ENCODE measurements at regions of chr6 and their contacts with region 1.

Region 1: GRCh38 chr6:26122793-26123674 is 35.8 kb downstream of the HFE start:
- DNase-seq: peak; percentile 89 to 99 (median 98)
- ATAC-seq: peak; percentile 87 to 90 (median 88)
- H3K4me3 ChIP-seq: peak overlapping the region; percentile 73 to 97 (median 82)
- H3K27ac ChIP-seq: peak overlapping the region; percentile 95 to 99 (median 98)
- H3K4me1 ChIP-seq: peaks cover 0 to 25% (median 17%) of the 10 kb centered on the region in 12 donors
- H3K27me3 ChIP-seq: no peaks in the 10 kb centered on the region
- CTCF ChIP-seq: peak in 1 of 12 donors; percentile 7
- POLR2A ChIP-seq: peak; percentile 54 to 58

Region 2: DNA sequence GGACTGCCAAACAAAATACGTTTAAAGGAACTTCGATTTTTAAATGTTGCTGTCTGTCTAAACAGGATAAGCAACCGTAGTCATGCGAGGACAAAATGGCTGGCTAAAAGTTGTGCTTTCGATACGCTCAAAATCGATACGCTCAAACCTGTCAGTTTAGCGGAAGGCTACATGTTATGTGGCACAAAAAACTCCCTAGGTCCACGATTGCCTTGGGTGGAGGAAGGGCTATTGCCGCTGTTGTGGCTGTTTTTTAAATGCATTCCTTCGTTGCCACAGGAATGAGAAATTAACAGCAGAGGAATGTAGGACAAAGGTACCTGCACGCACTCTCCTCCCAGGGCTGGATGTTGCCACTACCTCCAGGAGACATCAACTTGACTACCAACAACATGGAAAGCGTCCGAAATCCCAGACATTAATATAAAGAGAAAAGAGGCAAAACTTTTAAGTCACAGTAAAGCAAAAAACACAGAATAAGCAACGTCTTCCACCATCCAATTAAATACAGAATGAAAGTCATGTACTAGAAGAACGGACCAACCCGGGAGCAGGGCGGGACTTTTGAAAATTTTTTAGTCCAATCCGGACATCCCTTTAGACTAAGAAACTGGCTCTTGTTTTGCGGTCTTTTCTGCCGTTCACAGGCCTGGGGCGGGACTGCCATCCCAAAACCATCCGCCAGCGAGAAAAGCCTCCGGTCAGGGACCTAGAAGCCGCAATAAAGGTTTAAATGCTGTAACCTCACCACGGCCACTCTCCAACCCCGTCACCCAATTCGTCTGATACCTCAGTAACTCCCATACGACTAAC is 68.0 kb before region 1 on chr6:
- intact Hi-C with region 1: loop called in 1 of 10 experiments (anchors 1 kb)
- DNase-seq: peak; percentile 80 to 92 (median 89)
- ATAC-seq: peak; percentile 79 to 89 (median 84)
- H3K4me3 ChIP-seq: peak overlapping the region; percentile 59 to 80 (median 74)
- H3K27ac ChIP-seq: peak overlapping the region; percentile 81 to 98 (median 95)
- H3K4me1 ChIP-seq: peaks cover 0 to 24% (median 10%) of the 10 kb centered on the region in 12 donors
- H3K27me3 ChIP-seq: no peaks in the 10 kb centered on the region
- CTCF ChIP-seq: peak in 2 of 12 donors; percentile 5 to 22
- POLR2A ChIP-seq: no peak

Region 3: DNA sequence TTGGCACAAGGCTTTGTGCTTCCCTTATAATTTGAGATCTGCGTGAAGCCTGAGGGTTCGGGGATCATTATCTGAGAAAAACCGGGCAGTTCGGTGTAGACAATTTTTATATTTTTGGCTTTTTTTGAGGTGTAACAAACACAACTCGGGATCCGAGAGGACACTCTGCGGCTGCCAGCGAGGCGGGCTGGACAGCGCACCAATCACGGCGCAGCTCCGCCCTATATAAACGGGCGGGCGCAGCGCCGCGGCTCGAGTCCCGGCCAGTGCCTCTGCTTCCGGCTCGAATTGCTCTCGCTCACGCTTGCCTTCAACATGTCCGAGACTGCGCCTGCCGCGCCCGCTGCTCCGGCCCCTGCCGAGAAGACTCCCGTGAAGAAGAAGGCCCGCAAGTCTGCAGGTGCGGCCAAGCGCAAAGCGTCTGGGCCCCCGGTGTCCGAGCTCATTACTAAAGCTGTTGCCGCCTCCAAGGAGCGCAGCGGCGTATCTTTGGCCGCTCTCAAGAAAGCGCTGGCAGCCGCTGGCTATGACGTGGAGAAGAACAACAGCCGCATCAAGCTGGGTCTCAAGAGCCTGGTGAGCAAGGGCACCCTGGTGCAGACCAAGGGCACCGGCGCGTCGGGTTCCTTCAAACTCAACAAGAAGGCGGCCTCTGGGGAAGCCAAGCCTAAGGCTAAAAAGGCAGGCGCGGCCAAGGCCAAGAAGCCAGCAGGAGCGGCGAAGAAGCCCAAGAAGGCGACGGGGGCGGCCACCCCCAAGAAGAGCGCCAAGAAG is 33.2 kb after region 1 on chr6:
- intact Hi-C with region 1: loop called in 9 of 10 experiments (anchors 1 to 2 kb)
- DNase-seq: peak; percentile 92 to 96 (median 93)
- ATAC-seq: peak; percentile 80 to 89 (median 86)
- H3K4me3 ChIP-seq: peak overlapping the region; percentile 49 to 94 (median 78)
- H3K27ac ChIP-seq: peak overlapping the region; percentile 70 to 98 (median 95)
- H3K4me1 ChIP-seq: peaks cover 0 to 30% (median 11%) of the 10 kb centered on the region in 12 donors
- H3K27me3 ChIP-seq: no peaks in the 10 kb centered on the region
- CTCF ChIP-seq: peak in 1 of 12 donors; percentile 7
- POLR2A ChIP-seq: peak; percentile 67 to 99

Region 4: DNA sequence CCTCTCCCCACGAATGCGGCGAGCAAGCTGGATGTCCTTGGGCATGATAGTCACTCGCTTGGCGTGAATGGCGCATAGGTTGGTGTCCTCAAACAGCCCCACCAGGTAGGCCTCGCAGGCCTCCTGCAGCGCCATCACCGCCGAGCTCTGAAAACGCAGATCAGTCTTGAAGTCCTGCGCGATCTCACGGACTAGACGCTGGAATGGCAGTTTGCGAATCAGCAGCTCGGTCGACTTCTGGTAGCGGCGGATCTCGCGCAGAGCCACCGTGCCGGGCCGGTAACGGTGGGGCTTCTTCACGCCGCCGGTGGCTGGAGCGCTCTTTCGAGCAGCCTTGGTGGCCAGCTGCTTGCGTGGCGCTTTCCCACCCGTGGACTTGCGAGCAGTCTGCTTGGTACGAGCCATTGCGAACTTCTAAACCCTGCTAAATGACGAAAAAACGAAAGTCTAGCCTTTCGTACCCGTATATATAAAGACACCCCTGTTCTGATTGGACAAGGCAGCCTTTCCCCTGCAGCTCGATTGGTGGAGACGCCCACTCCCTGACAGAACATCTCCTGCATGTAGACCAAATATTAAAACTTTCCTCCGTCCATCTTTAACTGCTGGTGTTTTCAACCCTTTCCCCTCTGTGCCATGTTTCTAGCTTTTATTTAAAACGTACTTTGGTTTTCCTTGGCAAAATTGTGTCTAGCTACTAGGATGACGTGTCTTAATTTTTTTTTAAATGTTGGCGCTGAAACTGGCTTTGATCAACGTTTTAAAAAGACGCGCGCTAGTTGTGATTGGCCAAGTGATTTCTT is 74.0 kb after region 1 on chr6:
- intact Hi-C with region 1: loop called in 6 of 10 experiments (anchors 2 to 10 kb)
- DNase-seq: peak; percentile 75 to 82 (median 79)
- ATAC-seq: peak; percentile 37 to 79 (median 66)
- H3K4me3 ChIP-seq: peak overlapping the region; percentile 15 to 77 (median 69)
- H3K27ac ChIP-seq: peak overlapping the region in 11 of 12 donors; percentile 60 to 96 (median 84)
- H3K4me1 ChIP-seq: peaks cover 0 to 46% (median 20%) of the 10 kb centered on the region in 12 donors
- H3K27me3 ChIP-seq: peaks cover 0 to 18% (median 0%) of the 10 kb centered on the region in 9 donors
- CTCF ChIP-seq: no peak
- POLR2A ChIP-seq: peak in 1 of 2 donors; percentile 82

Region 5: DNA sequence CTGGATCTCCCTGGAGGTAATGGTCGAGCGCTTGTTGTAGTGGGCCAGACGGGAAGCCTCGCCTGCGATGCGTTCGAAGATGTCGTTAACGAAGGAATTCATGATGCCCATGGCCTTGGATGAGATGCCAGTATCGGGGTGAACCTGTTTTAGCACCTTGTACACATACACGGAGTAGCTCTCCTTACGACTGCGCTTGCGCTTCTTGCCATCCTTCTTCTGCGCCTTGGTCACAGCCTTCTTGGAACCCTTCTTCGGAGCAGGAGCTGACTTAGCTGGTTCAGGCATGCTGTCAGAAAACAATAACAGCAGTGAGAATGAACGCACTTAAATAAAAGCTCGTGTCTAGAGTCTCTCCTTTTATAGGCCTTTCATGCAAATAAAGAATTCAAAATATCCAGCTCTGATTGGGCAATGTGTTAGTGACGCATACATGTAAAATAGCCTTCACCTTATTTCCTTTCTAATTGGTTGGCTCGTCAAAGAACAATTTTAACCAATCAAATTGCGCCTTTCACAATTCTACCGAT is 93.4 kb after region 1 on chr6:
- intact Hi-C with region 1: loop called in 1 of 10 experiments (anchors 5 kb)
- DNase-seq: peak; percentile 56 to 70 (median 60)
- ATAC-seq: peak; percentile 86 to 89 (median 88)
- H3K4me3 ChIP-seq: peak overlapping the region; percentile 19 to 74 (median 62)
- H3K27ac ChIP-seq: peak overlapping the region; percentile 81 to 98 (median 94)
- H3K4me1 ChIP-seq: peaks cover 0 to 31% (median 9%) of the 10 kb centered on the region in 12 donors
- H3K27me3 ChIP-seq: peaks cover 0 to 20% (median 0%) of the 10 kb centered on the region in 9 donors
- CTCF ChIP-seq: no peak
- POLR2A ChIP-seq: peak; percentile 84 to 98